Cardiac septum (tissue), 1 donor: ENCODE measurements at regions of chr1 and their contacts with region 1.

Region 1: GRCh38 chr1:246971090-246971721 is 36.7 kb downstream of the ZNF695 start:
- DNase-seq: peak; percentile 86

Region 2: DNA sequence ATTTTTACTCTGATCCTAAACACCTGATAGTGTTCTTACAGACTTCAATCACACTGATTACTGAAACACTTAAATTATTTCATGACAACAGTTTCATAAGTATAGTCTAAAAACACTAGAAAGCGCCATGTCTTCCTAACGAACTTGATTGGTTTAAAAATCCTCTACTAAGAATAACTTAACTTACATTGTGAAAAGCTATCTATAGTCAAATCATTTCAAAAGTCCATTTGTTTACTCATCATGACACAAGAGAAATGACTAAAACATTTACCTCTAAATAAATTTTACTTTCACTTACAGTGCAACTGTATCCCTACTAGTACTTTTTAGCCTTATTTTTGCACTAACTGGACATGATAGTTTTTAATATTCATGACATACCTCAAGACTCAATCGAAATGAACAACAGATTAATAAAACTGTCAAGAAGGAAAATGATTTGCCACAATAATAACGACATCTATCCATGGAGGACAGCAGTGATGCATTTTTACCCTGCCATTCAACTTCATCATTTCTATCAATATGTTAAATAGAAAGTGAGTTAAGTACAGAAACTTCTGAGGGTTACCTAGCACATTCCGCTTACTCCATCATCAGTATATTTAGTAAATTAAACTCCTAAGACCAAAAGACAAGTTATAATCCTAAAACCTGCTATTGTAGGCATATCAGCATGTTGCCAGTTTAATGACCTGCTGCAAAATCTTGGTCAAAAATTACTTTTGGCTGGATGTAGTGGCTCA is 77.8 kb before region 1 on chr1:
- intact Hi-C with region 1: no loop called
- DNase-seq: no peak

Region 3: DNA sequence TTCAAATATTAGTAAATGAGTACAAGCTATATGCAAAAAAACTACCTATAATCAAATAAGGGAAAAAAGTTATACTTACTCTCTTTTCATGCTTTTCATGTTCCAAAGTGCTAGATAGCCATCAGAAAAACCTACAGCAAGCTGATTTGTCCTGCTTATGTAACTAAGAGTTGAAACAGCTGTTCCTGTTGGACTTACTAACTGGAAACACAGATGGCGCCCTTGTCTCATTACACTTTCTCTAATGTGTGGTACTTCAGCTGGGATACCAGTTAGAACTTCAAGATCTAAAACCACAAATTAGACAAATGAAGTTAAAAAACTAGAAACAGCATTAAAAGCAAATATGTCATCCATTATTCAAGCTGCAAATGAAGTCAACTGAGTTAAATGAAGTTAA is 63.7 kb before region 1 on chr1:
- intact Hi-C with region 1: loop called (anchors 1 kb)
- DNase-seq: no peak